ENCODE measurements at regions of chr11 and their contacts with region 1.

Region 1: DNA sequence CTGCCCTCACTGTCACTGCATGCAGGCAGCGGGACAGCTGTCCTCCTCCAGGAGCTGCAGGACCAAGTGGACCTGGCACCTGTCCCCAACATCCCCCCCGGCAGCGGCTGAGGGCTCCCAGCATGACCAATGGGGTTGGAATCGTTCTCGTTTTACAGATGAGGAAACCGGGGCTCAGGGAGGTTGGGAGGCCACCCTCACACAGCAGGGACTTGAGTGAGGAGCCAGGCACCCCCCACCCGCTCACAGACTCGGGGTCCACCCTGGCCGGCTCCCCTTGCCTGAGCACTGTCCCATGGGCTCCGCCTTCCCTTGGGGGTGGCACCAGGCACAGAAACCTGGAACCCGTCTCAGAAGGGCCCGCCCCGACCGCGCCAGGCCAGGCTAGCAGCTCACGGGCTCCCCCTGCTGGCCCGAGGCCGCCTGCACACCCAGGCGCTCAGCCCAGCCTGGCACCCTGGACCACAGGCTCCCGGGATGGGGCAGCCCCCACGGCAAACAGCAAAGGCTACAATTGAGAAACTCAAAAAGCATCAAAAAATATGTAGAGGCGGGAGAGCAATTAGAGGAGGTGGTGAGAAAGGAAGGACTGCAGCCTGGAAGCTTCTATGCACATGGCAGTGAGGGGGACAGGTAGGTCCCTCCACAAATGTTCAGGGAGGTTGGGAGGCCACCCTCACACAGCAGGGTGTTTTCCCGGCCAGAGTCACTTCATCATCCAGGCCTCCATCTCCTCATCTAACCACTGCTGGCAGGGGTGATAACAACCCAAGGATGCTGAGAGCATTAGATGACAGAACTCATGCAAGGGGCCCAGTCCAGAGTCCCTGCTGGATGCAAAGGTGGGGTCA is 12.8 kb downstream of the MACROD1 start:
- DNase-seq: peak; percentile 72 to 82
- ATAC-seq: peak; percentile 87 to 98 (median 96)
- H3K4me3 ChIP-seq: no peak overlapping the region
- H3K4me3 Mint-ChIP-seq: no peak overlapping the region
- H3K27ac ChIP-seq: no peak overlapping the region
- H3K27ac Mint-ChIP-seq: no peak overlapping the region
- H3K4me1 ChIP-seq: peaks cover 6% of the 10 kb centered on the region
- H3K4me1 Mint-ChIP-seq: peaks cover 11% of the 10 kb centered on the region in 2 donors
- H3K27me3 ChIP-seq: no peaks in the 10 kb centered on the region
- H3K27me3 Mint-ChIP-seq: peaks cover 0 to 12% of the 10 kb centered on the region in 2 donors
- CTCF ChIP-seq: peak; percentile 99

Region 2: DNA sequence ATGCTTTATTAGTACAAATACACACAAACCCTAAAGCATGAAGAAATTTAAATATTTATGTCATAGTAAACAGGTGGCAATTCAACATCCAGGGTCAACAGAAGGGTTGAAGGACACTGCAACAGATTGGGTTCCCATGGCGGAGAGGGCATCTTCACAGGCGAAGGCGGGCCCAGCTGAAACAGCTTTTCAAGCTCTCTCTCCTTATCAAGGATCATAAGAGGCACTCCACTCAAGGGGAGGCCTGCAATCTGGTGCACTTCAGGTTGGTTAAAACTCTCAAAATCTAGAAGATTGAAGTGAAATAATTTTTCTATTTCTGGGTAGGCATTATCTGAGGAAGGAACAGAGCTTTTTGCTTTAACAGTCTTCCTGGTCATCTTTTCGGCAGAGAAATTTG is 1120.6 kb before region 1 on chr11:
- intact Hi-C with region 1: loop called (anchors 10 kb)
- DNase-seq: no peak
- ATAC-seq: no peak
- H3K4me3 ChIP-seq: no peak overlapping the region
- H3K4me3 Mint-ChIP-seq: no peak overlapping the region
- H3K27ac ChIP-seq: no peak overlapping the region
- H3K27ac Mint-ChIP-seq: no peak overlapping the region
- H3K4me1 ChIP-seq: no peaks in the 10 kb centered on the region
- H3K4me1 Mint-ChIP-seq: peaks cover 0 to 7% of the 10 kb centered on the region in 2 donors
- H3K27me3 ChIP-seq: no peaks in the 10 kb centered on the region
- H3K27me3 Mint-ChIP-seq: peaks cover 16 to 34% of the 10 kb centered on the region in 2 donors
- CTCF ChIP-seq: no peak

Region 3: DNA sequence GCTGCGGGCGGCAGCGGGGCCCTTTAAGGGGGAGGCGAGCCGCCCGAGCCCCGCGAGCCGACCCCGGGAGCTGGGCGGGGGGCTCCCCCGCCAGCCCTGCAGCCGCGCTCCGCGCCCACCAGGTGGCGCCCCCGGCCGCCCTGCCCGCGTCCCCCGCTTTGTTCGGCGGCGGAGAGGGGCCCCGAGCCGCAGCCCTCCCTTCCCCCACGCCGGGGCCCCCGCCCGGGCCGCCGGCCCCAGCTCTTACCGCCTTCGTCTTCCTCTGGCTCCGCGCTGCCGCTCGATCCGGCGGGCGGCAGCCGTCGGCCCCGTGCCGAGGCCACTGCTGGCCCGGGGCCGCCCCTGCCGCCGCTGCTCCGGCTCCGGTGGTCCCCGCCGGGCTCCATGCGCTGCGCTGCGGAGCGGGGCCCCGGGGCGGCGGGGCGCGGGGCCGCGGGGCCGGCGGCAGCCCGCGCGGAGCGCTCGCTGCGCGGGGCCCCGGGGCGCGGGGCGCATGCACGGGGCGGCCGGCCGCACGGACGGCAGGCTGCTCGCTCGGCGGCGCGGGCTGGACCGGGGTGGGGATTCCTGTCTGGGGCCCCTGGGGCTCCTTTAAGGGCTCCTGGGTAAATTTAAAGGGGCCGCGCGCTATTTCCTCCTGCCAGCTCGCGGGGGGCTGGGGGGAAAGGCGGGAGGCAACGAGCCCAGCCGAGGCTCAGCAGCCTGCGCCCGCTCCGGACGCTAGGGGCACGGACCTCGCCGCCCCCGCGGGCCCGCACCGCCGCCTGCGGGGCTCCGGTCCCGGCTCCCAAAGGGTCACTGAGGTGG is 384.6 kb before region 1 on chr11 and contains the start of gene ZFTA:
- intact Hi-C with region 1: loop called (anchors 1 kb)
- DNase-seq: peak; percentile 71 to 79
- ATAC-seq: peak; percentile 69 to 79 (median 77)
- H3K4me3 ChIP-seq: peak within 1 kb of the TSS; percentile 83
- H3K4me3 Mint-ChIP-seq: peak within 1 kb of the TSS; percentile 98
- H3K27ac ChIP-seq: no peak within 1 kb of the TSS
- H3K27ac Mint-ChIP-seq: peak within 1 kb of the TSS; percentile 80 to 84
- H3K4me1 ChIP-seq: peaks cover 22% of the 10 kb centered on the region
- H3K4me1 Mint-ChIP-seq: peaks cover 9 to 11% of the 10 kb centered on the region in 2 donors
- H3K27me3 ChIP-seq: peaks cover 12% of the 10 kb centered on the region
- H3K27me3 Mint-ChIP-seq: peaks cover 5 to 12% of the 10 kb centered on the region in 2 donors
- CTCF ChIP-seq: peak; percentile 67
- total RNA-seq, gene ZFTA: 3.7 to 5.3 (median 4.8) TPM

Region 4: GRCh38 chr11:63855975-63856749 is 296.9 kb before region 1 on chr11:
- intact Hi-C with region 1: no loop called
- DNase-seq: peak in 1 of 2 donors; percentile 55
- ATAC-seq: peak; percentile 62 to 84 (median 64)
- H3K4me3 ChIP-seq: no peak overlapping the region
- H3K4me3 Mint-ChIP-seq: peak overlapping the region; percentile 62
- H3K27ac ChIP-seq: peak overlapping the region; percentile 64
- H3K27ac Mint-ChIP-seq: peak overlapping the region; percentile 85 to 88
- H3K4me1 ChIP-seq: peaks cover 43% of the 10 kb centered on the region
- H3K4me1 Mint-ChIP-seq: peaks cover 51 to 53% of the 10 kb centered on the region in 2 donors
- H3K27me3 ChIP-seq: no peaks in the 10 kb centered on the region
- H3K27me3 Mint-ChIP-seq: no peaks in the 10 kb centered on the region
- CTCF ChIP-seq: no peak

Region 5: DNA sequence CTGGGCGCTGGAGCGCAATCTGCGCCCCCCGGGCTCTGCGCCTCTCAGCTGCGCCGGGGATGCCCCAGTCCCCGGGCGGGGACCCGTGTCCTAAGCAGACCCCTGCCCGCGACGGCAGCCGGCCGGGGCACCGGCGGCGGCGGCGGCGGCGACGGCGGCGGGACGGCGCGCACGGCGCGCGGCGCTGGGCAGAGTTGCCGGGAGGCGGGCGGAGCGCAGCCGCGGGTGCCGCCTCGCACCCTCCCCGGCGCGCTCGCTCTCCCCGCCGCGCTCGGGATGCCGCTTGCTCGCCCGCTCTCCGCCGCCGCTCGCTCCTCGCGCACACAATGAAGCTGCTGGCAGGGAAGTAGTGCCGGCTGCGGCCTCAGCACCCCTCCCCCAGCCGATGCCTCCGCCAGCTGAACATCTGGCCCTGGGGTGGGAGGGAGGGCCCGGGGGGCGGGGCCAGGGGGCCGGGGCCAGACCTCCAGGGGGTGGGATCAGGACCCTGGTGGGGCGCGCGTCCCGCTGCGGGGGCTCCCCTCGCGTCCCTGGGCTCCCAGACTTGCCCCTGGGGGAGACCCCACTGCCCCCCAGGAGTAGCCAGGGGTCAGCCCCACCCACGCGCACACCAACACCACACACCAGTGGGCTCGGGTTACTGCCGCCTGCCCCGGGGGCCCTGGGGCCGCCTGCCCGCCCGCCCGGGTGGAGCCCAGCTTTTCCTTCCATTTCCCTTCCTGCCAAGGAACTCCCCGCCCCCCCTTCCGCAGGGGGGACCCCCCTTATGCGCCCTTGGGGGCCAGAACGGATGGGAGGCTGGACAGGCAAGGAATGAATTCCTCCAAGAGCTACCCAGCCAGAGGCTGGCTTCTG is 236.0 kb before region 1 on chr11 and contains the start of gene RCOR2:
- intact Hi-C with region 1: loop called (anchors 5 kb)
- DNase-seq: peak; percentile 45 to 78
- ATAC-seq: peak; percentile 60 to 73 (median 71)
- H3K4me3 ChIP-seq: peak within 1 kb of the TSS; percentile 39
- H3K4me3 Mint-ChIP-seq: peak within 1 kb of the TSS; percentile 91
- H3K27ac ChIP-seq: no peak within 1 kb of the TSS
- H3K27ac Mint-ChIP-seq: peak within 1 kb of the TSS in 1 of 2 donors; percentile 58
- H3K4me1 ChIP-seq: peaks cover 38% of the 10 kb centered on the region
- H3K4me1 Mint-ChIP-seq: peaks cover 0 to 32% of the 10 kb centered on the region in 2 donors
- H3K27me3 ChIP-seq: peaks cover 7% of the 10 kb centered on the region
- H3K27me3 Mint-ChIP-seq: peaks cover 0 to 5% of the 10 kb centered on the region in 2 donors
- CTCF ChIP-seq: no peak
- total RNA-seq, gene RCOR2: not detected

Region 6: DNA sequence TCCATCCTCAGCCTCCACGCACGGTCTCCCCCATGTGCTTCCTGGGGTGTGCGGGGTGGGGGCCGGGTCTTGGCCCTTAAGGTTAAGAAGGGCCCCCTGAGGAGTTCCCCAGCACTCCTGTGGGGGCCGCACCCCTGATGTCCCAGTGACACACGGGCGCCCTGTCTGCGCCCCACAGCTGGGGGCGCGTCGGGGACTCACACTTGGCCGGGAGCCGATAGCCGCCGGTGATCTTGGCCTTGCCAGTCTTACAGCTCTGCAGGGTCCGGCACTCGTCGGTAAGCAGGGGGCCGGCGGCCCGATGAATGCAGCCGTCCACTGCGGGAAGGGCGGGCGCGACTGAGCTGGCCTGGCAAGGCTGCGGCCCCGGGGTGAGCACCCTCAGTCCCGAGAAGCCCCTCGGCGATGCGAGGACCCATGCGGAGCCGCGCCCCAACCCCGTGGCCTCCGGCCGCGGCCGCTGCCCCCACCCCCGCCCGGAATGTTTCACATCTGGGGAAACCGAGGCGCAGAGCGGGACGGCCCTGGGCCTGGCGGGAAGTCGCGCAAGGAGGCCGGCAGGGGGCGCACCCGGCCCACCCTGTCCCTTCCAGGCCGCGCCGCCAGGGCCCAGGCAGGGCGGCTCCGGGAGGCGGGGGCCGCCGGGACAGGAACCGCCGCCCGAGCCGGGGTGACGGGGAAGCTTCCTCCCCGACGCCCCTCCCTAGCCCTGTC is 152.9 kb before region 1 on chr11:
- intact Hi-C with region 1: loop called (anchors 2 kb)
- DNase-seq: peak; percentile 70 to 89
- ATAC-seq: peak; percentile 83 to 88 (median 84)
- H3K4me3 ChIP-seq: peak overlapping the region; percentile 12
- H3K4me3 Mint-ChIP-seq: peak overlapping the region; percentile 25
- H3K27ac ChIP-seq: no peak overlapping the region
- H3K27ac Mint-ChIP-seq: no peak overlapping the region
- H3K4me1 ChIP-seq: peaks cover 19% of the 10 kb centered on the region
- H3K4me1 Mint-ChIP-seq: peaks cover 0 to 15% of the 10 kb centered on the region in 2 donors
- H3K27me3 ChIP-seq: peaks cover 4% of the 10 kb centered on the region
- H3K27me3 Mint-ChIP-seq: peaks cover 6 to 19% of the 10 kb centered on the region in 2 donors
- CTCF ChIP-seq: peak; percentile 83

Region 7: GRCh38 chr11:64713031-64713780 is 560.1 kb after region 1 on chr11:
- intact Hi-C with region 1: no loop called
- DNase-seq: peak in 1 of 2 donors; percentile 44
- ATAC-seq: peak in 2 of 3 donors; percentile 61 to 68
- H3K4me3 ChIP-seq: no peak overlapping the region
- H3K4me3 Mint-ChIP-seq: no peak overlapping the region
- H3K27ac ChIP-seq: no peak overlapping the region
- H3K27ac Mint-ChIP-seq: no peak overlapping the region
- H3K4me1 ChIP-seq: peaks cover 12% of the 10 kb centered on the region
- H3K4me1 Mint-ChIP-seq: peaks cover 10 to 21% of the 10 kb centered on the region in 2 donors
- H3K27me3 ChIP-seq: peaks cover 28% of the 10 kb centered on the region
- H3K27me3 Mint-ChIP-seq: peaks cover 54 to 72% of the 10 kb centered on the region in 2 donors
- CTCF ChIP-seq: no peak